Caco-2 (cell line): ENCODE measurements at regions of chr17 and their contacts with region 1.

Region 1: GRCh38 chr17:4939796-4940624 is at the starts of genes RNF167 and SLC25A11:
- DNase-seq: peak; percentile 91 to 94
- H3K4me3 ChIP-seq: peak within 1 kb of the TSS; percentile 73
- H3K4me3 Mint-ChIP-seq: peak within 1 kb of the TSS; percentile 87
- H3K27ac Mint-ChIP-seq: peak within 1 kb of the TSS; percentile 89
- H3K4me1 ChIP-seq: no peaks in the 10 kb centered on the region
- H3K4me1 Mint-ChIP-seq: peaks cover 5% of the 10 kb centered on the region
- H3K27me3 ChIP-seq: no peaks in the 10 kb centered on the region
- H3K27me3 Mint-ChIP-seq: no peaks in the 10 kb centered on the region
- CTCF ChIP-seq: no peak
- total RNA-seq, gene RNF167: 55.1 and 60.9 TPM in 2 replicates
- total RNA-seq, gene SLC25A11: 36.5 and 40.1 TPM in 2 replicates

Region 2: DNA sequence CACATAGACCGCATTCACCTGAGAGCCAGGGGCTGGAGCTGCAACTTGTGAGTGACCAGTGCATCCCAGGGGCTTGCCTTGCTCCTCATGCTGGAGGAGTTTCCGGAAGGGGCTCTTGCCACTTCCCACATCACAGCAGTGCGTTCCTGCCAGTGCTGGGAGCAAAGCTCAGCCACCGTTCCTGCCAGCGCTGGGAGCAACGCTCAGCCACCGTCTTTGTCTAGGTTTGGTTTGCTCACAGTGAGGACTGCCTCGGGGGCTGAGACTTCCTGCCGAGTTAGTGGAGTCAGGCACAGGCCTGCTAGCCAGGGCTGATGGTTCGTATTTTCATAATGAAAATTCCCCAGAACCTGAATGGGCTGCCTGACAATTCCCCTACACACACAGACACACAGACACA is 31.7 kb before region 1 on chr17:
- CTCF ChIA-PET with region 1: interaction called, 19 read pairs
- POLR2A ChIA-PET with region 1: interaction called, 10 read pairs
- intact Hi-C with region 1: loop called (anchors 1 kb)
- DNase-seq: no peak
- H3K4me3 ChIP-seq: no peak overlapping the region
- H3K4me3 Mint-ChIP-seq: no peak overlapping the region
- H3K27ac Mint-ChIP-seq: no peak overlapping the region
- H3K4me1 ChIP-seq: peaks cover 8% of the 10 kb centered on the region
- H3K4me1 Mint-ChIP-seq: peaks cover 4% of the 10 kb centered on the region
- H3K27me3 ChIP-seq: no peaks in the 10 kb centered on the region
- H3K27me3 Mint-ChIP-seq: no peaks in the 10 kb centered on the region
- CTCF ChIP-seq: no peak